ENCODE measurements at regions of chr13 and their contacts with region 1.

Region 1: GRCh38 chr13:20945952-20946383 is 43.4 kb upstream of the XPO4 start:
- DNase-seq: peak in 1 of 42 donors; percentile 3

Region 2: DNA sequence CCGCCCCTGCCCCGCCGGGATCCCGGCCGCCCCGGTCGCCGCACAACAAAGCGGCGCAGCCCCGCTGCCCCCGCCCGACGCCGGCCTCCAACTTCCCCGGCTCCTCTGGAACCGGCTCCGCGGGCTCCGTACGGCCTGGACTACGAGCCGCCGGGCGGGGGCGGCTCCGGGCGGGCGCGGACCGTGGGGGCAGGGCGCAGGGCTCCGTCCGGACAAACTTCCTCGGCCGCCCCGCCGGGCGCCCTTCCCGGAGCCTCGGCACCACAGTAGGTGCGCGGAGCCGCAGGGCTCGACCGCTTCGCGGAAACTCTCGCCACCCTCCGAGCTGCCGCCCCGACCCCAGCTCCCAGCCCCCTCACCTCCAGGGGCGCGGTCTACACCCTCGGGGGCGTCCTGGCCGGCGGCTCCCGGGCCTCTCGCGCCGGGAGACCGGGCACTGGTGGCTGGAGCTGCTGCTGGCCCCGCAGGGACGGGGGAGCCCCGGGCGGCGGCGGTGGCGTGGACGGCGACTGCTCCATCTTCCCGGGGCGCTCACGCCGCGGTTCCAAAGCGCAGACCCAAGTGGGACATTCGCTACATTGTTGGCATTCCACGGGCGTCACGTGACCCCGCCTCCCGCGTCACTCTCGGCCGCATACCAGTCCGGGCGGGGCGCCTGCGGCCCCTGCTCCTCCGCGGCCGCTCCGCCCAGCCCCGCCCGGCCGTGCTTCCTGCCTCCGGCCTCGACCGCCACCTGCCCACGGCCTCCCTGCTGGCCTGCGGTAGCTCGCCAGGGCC is 115.2 kb after region 1 on chr13 and contains the start of gene LATS2:
- intact Hi-C with region 1: loop called (anchors 10 kb)
- DNase-seq: peak; percentile 78 to 96 (median 90)

Region 3: DNA sequence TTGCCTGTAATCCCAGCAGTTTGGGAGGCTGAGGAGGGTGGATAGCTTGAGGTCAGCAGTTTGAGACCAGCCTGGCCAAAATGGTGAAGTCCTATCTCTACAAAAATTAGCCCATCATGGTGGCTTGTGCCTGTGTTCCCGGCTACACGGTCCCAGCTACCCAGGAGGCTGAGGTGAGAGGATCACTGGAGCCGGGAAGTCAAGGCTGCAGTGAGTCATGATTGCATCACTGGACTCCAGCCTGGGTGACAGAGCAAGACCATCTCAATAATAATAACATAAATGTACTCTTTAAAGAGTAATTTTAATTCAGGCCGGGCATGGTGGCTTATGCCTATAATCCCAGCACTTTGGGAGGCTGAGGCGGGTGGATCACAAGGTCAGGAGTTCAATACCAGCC is 191.7 kb after region 1 on chr13:
- intact Hi-C with region 1: loop called (anchors 10 kb)
- DNase-seq: no peak

Measured in head of caudate nucleus (tissue), 42 donors.